CD14-positive monocyte (primary cell): ENCODE measurements at regions of chr17 and their contacts with region 1.

Region 1: DNA sequence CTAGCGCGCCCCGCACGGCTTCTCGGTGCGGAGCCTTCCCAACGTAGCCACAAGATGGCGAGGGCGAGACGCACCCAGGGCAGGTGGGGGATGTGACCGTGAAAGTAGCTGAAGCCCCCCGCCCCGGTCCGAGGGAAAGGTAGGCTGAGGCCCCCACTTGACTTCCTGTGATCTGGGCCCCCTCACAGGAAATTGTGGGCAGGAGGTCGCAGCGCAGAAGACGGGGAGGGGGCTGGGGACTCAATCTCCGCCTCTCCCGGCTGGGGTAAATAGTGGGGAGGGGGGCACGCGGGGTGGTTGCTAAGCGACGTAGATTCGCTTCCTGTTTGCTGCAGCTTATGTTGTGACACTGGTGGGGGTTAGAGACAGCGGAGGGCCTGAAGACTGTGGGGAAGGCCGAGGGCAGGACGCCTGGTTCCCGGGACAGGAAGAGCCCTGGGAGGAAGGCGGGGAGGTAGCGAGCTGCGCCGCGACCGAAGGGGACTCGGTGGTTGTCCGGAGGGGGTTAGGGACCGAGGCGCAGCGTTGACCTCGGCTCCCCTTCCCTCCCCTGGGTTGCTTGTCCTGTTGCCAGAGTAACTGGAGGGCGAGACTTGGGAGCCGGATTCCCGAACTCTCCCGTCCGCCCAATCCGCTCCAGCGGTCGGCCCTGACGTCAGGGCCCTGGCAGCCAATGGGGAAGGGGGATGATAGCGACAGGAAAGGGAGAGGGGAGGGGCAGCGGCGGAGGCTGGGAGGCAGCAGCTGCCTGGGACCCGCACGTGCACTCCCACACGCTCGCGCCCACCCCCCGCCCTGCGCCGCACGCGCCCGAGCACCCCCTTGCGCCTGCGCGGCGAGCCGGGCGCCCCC is 1.2 kb downstream of the KDM6B start:
- DNase-seq: peak; percentile 94 to 98 (median 97)
- H3K4me3 ChIP-seq: peak overlapping the region; percentile 71 to 92 (median 72)
- H3K4me3 Mint-ChIP-seq: peak overlapping the region; percentile 92 to 94
- H3K27ac ChIP-seq: peak overlapping the region; percentile 93 to 98
- H3K27ac Mint-ChIP-seq: peak overlapping the region; percentile 97 to 100 (median 98)
- H3K4me1 ChIP-seq: peaks cover 55 to 64% of the 10 kb centered on the region in 2 donors
- H3K4me1 Mint-ChIP-seq: peaks cover 48% of the 10 kb centered on the region
- H3K27me3 ChIP-seq: no peaks in the 10 kb centered on the region
- H3K27me3 Mint-ChIP-seq: peaks cover 11 to 12% (median 12%) of the 10 kb centered on the region in 3 donors
- CTCF ChIP-seq: peak; percentile 84

Region 2: DNA sequence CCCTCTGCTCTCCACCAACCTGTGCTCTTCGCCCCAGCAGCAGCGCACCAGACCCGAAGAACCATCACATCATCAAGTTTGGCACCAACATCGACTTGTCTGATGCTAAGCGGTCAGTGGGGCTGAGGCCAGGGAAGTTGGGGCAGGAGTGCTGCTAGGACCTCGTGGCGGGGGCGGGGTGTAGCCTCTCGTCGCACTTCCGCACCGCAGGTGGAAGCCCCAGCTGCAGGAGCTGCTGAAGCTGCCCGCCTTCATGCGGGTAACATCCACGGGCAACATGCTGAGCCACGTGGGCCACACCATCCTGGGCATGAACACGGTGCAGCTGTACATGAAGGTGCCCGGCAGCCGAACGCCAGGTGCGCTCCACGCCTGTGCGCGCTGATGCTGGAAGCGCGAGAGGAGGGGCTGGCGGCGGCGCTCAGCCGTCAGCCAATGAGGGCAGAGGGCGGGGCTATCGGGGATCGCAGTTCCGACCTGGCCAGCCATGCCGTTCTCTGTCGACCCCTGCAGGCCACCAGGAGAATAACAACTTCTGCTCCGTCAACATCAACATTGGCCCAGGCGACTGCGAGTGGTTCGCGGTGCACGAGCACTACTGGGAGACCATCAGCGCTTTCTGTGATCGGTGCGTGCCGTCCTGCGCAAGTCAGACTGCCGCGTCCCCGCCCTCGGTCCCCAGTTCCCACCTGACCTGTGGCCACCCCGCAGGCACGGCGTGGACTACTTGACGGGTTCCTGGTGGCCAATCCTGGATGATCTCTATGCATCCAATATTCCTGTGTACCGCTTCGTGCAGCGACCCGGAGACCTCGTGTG is 16.5 kb after region 1 on chr17:
- intact Hi-C with region 1: loop called (anchors 2 kb)
- DNase-seq: peak; percentile 89 to 92 (median 90)
- H3K4me3 ChIP-seq: peak overlapping the region in 1 of 3 experiments; percentile 34
- H3K4me3 Mint-ChIP-seq: peak overlapping the region in 1 of 2 donors; percentile 45
- H3K27ac ChIP-seq: peak overlapping the region; percentile 9 to 33
- H3K27ac Mint-ChIP-seq: peak overlapping the region in 5 of 7 donors; percentile 72 to 89 (median 78)
- H3K4me1 ChIP-seq: peaks cover 32 to 39% of the 10 kb centered on the region in 2 donors
- H3K4me1 Mint-ChIP-seq: peaks cover 15% of the 10 kb centered on the region
- H3K27me3 ChIP-seq: no peaks in the 10 kb centered on the region
- H3K27me3 Mint-ChIP-seq: peaks cover 0 to 6% (median 2%) of the 10 kb centered on the region in 3 donors
- CTCF ChIP-seq: peak; percentile 97

Region 3: DNA sequence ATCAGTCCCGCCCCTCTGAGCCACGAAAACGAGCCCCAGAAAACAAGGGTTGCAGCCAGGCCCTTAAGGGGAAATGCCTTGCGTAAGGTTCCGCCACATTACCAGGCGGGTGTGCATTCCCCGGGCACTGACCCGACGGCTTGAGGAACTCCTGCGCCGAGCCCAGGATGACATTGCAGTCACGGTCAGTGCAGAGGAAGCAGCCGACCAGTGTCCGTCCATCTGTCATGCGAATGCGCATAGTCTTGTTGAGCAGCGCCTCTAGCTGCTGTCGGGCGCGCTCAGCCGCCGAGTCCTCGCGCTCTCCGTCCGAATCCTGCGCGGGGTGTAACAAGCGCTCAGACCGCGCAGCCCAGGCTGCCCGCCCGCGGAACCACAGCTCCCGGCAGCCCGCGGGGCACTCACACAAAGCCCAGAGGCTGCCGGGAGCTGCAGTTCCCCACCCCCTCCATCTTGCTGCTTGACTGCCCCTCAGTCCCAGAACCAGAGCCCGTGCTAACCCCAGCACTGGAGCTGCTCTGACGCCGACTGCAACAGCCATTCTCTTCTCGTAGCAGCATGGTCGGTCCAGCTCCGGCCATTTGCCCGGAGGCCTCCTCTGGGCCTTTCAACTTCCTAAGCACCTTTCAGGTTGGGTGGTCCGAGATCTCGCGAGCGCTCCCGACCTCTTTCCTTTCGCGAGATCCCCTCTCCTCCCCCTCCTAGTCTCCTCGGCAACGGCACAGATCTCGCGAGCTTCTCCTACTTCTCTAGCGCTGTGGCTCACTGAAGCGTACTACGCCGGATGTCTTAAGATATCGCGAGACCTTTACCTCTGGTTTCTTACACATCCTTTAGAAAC is 21.9 kb after region 1 on chr17 and contains the start of gene NAA38:
- intact Hi-C with region 1: loop called in 1 of 2 experiments (anchors 2 kb)
- DNase-seq: peak; percentile 97 to 99 (median 98)
- H3K4me3 ChIP-seq: peak within 1 kb of the TSS; percentile 67 to 95 (median 74)
- H3K4me3 Mint-ChIP-seq: no peak within 1 kb of the TSS
- H3K27ac ChIP-seq: peak within 1 kb of the TSS; percentile 94 to 95
- H3K27ac Mint-ChIP-seq: no peak within 1 kb of the TSS
- H3K4me1 ChIP-seq: peaks cover 38 to 48% of the 10 kb centered on the region in 2 donors
- H3K4me1 Mint-ChIP-seq: no peaks in the 10 kb centered on the region
- H3K27me3 ChIP-seq: no peaks in the 10 kb centered on the region
- H3K27me3 Mint-ChIP-seq: peaks cover 0 to 4% (median 2%) of the 10 kb centered on the region in 3 donors
- CTCF ChIP-seq: no peak
- polyA plus RNA-seq, gene NAA38: 63.8 to 197 (median 148) TPM

Region 4: DNA sequence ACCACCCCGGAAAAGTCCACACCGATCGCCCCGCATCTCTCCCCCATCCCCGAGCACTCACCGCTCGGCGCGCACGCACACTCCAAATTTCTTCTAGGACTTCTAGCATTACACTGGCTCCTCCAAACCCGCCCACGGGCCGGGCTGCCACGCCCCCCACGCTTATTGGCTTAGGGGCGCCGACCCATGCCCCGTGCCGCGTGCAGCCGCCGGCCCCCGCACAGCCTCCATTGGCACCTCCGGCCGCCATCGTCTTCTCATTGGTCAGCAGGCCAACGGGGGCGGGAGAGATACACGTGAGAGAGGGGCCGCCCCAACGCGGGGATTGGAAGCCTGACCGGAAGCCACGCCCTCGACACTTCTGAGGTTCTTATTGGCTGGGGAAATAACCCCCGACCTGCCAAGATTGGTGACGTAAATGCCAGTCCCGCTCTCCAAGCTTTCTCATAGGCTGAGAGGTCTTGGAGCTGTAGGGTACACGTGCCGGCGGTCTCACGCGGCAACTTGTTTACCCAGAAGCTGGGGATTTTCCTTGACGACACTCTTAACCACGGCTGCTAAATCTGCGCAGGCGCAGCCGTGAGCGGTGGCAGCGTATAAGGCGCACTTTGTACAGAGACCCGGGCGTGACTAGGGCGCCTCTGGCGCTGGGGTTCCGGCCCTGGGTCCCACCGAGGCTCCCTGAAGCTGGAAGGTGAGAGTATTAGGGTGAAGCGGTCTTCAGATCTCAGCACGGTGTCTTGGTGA is 321.2 kb after region 1 on chr17:
- intact Hi-C with region 1: loop called (anchors 5 to 10 kb)
- DNase-seq: peak; percentile 100
- H3K4me3 ChIP-seq: peak overlapping the region; percentile 65 to 100 (median 88)
- H3K4me3 Mint-ChIP-seq: no peak overlapping the region
- H3K27ac ChIP-seq: peak overlapping the region; percentile 89 to 99
- H3K27ac Mint-ChIP-seq: no peak overlapping the region
- H3K4me1 ChIP-seq: peaks cover 63 to 93% of the 10 kb centered on the region in 2 donors
- H3K4me1 Mint-ChIP-seq: peaks cover 50% of the 10 kb centered on the region
- H3K27me3 ChIP-seq: no peaks in the 10 kb centered on the region
- H3K27me3 Mint-ChIP-seq: peaks cover 0 to 5% (median 0%) of the 10 kb centered on the region in 3 donors
- CTCF ChIP-seq: no peak